Activated B cell treated with CpG ODN at 0.5 μM for 24 hours (primary cell): ENCODE measurements at regions of chr19 and their contacts with region 1.

Region 1: DNA sequence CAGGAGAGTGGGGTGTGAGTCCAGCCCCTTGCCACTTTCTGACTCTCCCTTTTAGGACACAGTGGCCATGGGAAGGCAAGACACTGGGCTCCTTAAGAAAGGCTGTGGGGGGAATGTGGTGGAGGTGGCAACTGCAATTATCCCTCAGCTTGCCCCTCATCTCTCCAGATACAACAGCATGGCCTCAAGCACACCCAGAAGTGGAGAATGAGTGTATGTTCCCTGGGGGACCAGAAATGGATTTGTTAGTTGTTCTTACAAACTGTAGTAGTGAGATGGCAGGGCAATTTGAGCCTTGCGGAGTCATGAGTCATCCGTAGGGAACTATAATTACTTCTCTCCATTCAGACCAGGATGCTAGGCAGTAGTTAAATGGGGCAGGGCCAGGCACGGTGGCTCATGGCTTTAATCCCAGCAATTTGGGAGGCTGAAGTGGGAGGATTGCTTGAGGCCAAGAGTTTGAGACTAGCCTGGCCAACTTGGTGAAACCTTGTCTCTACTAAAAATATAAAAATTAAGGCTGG is 25.6 kb upstream of the CXCL17 start:
- DNase-seq: no peak
- ATAC-seq: no peak
- H3K4me3 Mint-ChIP-seq: no peak overlapping the region
- H3K27ac Mint-ChIP-seq: no peak overlapping the region
- H3K4me1 Mint-ChIP-seq: peaks cover 53% of the 10 kb centered on the region
- H3K27me3 Mint-ChIP-seq: no peaks in the 10 kb centered on the region
- CTCF ChIP-seq: no peak

Region 2: DNA sequence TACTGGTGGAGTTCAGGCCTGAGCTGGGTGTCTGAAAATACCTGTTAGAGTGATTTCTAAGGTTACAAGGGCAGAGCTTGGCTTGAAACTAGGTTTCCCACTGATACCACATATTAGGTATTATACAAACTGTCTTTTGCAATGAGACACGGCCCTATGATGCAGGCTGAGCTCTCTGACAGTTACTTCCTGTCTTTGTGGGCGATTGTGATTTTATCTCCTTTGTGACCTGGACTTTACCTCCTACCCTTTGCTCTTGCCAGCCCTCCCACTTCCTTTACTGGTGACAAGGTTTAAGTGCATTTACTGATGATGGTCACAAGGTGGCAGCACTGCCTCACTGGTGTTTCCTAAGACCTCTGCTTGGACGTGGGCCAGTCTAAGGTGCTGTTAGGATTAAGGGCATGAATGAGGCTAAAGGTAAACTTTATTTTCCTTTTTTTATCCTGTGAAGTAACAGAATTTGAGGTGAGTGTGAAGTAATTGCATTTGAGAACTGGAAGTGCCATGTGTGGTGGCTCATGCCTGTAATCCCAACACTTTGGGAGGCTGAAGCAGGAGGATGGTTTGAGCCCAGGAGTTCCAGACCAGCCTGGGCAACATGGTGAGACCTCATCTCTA is 17.9 kb before region 1 on chr19:
- CTCF ChIA-PET with region 1: interaction called, 38 read pairs
- POLR2A ChIA-PET with region 1: interaction called, 17 read pairs
- intact Hi-C with region 1: loop called (anchors 1 kb)
- DNase-seq: peak; percentile 50
- ATAC-seq: peak; percentile 99
- H3K4me3 Mint-ChIP-seq: no peak overlapping the region
- H3K27ac Mint-ChIP-seq: no peak overlapping the region
- H3K4me1 Mint-ChIP-seq: peaks cover 14% of the 10 kb centered on the region
- H3K27me3 Mint-ChIP-seq: peaks cover 2% of the 10 kb centered on the region
- CTCF ChIP-seq: peak; percentile 77

Region 3: DNA sequence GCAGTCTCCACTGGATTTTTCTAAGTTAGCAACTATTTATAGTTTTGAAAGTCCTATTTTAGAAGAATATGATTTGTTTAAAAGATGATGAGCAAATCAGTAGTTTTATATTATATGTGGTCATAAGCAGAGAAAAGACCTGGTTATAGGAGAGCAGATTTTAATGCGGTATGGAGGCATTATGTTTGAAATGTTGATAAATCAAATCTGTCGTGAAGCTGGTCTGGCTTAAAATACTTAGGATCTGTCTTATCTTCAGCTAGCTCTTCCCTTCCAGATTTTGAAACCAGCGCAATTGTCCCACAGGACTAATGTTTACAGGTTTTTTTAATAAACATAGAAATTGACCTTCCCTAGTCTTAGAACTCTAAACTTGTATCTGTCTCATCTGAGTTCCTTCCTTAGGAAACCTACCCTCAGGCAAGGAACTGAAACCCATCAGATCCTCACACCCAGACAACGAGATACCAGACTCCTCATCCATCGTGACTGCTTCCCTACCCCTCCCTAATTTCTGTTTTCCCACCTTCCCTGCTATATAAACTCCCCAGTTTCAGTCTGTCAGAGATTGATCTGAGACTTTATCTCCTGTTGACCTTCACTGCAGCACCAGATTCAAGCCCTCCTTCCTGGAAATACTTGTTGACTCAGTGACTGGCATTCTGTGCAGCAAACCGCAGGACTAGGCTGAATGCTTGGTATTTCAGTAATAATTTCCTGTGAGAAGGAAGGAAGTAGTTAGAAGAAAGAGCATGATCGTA is 12.2 kb after region 1 on chr19:
- CTCF ChIA-PET with region 1: no interaction called
- POLR2A ChIA-PET with region 1: interaction called, 5 read pairs
- intact Hi-C with region 1: loop called (anchors 2 kb)
- DNase-seq: no peak
- ATAC-seq: peak; percentile 49
- H3K4me3 Mint-ChIP-seq: peak overlapping the region; percentile 17
- H3K27ac Mint-ChIP-seq: peak overlapping the region; percentile 13
- H3K4me1 Mint-ChIP-seq: peaks cover 16% of the 10 kb centered on the region
- H3K27me3 Mint-ChIP-seq: no peaks in the 10 kb centered on the region
- CTCF ChIP-seq: no peak

Region 4: DNA sequence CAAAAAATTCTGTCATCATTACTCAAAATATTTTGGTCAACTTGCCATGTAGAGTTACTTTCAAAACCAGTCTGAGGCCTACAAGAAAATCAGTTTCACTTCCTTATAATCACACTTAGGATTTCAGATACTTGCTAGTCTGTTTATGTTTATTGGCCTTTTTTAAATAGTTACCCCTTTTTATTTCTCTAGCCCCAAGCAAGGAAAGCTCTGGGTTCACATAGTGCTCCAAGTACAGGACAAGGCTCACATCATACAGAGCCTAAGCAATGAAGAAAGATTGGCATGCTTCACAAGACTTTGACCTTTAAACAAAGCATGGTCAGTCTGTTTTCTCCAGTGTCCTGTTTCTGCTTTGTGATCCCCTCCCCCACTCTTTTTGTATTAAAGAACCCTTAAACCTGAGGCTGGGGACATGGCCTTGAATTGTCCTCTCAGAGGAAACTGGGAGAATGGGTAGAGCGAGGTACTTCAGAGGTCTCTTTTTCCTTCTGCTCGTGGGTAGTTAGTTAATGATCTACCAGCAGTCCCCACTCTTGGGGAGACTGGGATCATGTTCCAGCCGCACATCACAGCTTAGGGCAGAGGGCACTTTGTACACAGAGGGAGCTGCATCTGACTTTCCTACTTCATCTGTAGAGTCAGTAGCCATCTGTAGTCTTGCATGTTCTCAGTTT is 29.3 kb after region 1 on chr19:
- CTCF ChIA-PET with region 1: interaction called, 10 read pairs
- POLR2A ChIA-PET with region 1: interaction called, 6 read pairs
- intact Hi-C with region 1: loop called (anchors 2 kb)
- DNase-seq: no peak
- ATAC-seq: peak; percentile 72
- H3K4me3 Mint-ChIP-seq: peak overlapping the region; percentile 45
- H3K27ac Mint-ChIP-seq: peak overlapping the region; percentile 86
- H3K4me1 Mint-ChIP-seq: peaks cover 32% of the 10 kb centered on the region
- H3K27me3 Mint-ChIP-seq: no peaks in the 10 kb centered on the region
- CTCF ChIP-seq: no peak